ENCODE measurements at regions of chr13 and their contacts with region 1.

Region 1: GRCh38 chr13:35714588-35715377 is 238.3 kb upstream of the MAB21L1 start:
- DNase-seq: no peak
- ATAC-seq: no peak
- H3K4me3 ChIP-seq: no peak overlapping the region
- H3K27ac ChIP-seq: no peak overlapping the region; the same call in 1 of the 2 replicates
- H3K4me1 ChIP-seq: peaks cover 16% of the 10 kb centered on the region
- H3K27me3 ChIP-seq: no peaks in the 10 kb centered on the region
- CTCF ChIP-seq: no peak
- POLR2A ChIP-seq: no peak
- RAD21 ChIP-seq: no peak

Region 2: GRCh38 chr13:35594096-35594495 is 120.7 kb before region 1 on chr13:
- CTCF ChIA-PET with region 1: no interaction called
- POLR2A ChIA-PET with region 1: no interaction called
- dilution Hi-C with region 1: no loop called
- in situ Hi-C with region 1: no loop called
- intact Hi-C with region 1: no loop called
- DNase-seq: no peak
- ATAC-seq: no peak
- H3K4me3 ChIP-seq: no peak overlapping the region
- H3K27ac ChIP-seq: no peak overlapping the region
- H3K4me1 ChIP-seq: peaks cover 2% of the 10 kb centered on the region; the same call in 1 of the 2 replicates
- H3K27me3 ChIP-seq: no peaks in the 10 kb centered on the region
- CTCF ChIP-seq: no peak
- POLR2A ChIP-seq: no peak
- RAD21 ChIP-seq: no peak

Region 3: GRCh38 chr13:35675651-35676050 is 39.1 kb before region 1 on chr13:
- CTCF ChIA-PET with region 1: interaction called, 3 read pairs
- POLR2A ChIA-PET with region 1: no interaction called
- dilution Hi-C with region 1: no loop called
- in situ Hi-C with region 1: no loop called
- intact Hi-C with region 1: loop called (anchors 1 kb)
- DNase-seq: no peak
- ATAC-seq: no peak
- H3K4me3 ChIP-seq: no peak overlapping the region
- H3K27ac ChIP-seq: no peak overlapping the region
- H3K4me1 ChIP-seq: no peaks in the 10 kb centered on the region
- H3K27me3 ChIP-seq: no peaks in the 10 kb centered on the region
- CTCF ChIP-seq: no peak
- POLR2A ChIP-seq: no peak
- RAD21 ChIP-seq: no peak